AG04449 (cell line): ENCODE measurements at regions of chr7 and their contacts with region 1.

Region 1: GRCh38 chr7:25894902-25895791 is 256.9 kb upstream of the NFE2L3 start:
- DNase-seq: no peak
- H3K4me3 ChIP-seq: peak overlapping the region; percentile 13; the same call in 1 of the 2 replicates
- CTCF ChIP-seq: peak; percentile 74

Region 2: DNA sequence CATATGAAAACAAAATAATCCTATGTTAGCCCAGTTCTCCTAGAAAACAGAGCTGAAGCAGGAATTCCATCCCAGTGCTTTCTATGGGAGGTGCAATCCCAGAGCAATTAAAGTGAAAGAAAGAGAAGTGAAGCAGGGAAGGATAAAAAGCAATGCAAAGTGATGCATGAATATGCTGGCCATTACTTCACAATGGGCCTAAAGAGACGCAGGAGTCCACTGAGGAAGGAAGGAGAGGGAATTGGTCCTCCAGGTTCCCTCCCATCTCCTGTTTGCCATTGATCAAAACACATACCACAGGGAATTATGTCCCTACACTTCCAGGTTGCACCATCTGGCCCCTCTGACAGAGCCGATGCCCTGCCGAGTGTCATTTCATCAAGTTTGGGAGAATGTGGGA is 135.4 kb before region 1 on chr7:
- CTCF ChIA-PET with region 1: no interaction called
- POLR2A ChIA-PET with region 1: no interaction called
- DNase-seq: no peak
- H3K4me3 ChIP-seq: no peak overlapping the region
- CTCF ChIP-seq: no peak

Region 3: GRCh38 chr7:25877802-25878789 is 17.1 kb before region 1 on chr7:
- CTCF ChIA-PET with region 1: interaction called, 30 read pairs
- POLR2A ChIA-PET with region 1: no interaction called
- DNase-seq: no peak
- H3K4me3 ChIP-seq: no peak overlapping the region
- CTCF ChIP-seq: no peak

Region 4: GRCh38 chr7:26061688-26062150 is 166.6 kb after region 1 on chr7:
- CTCF ChIA-PET with region 1: interaction called, 21 read pairs
- POLR2A ChIA-PET with region 1: no interaction called
- DNase-seq: no peak
- H3K4me3 ChIP-seq: no peak overlapping the region
- CTCF ChIP-seq: peak; percentile 78

Region 5: GRCh38 chr7:26200444-26201246 is 305.5 kb after region 1 on chr7 and contains the start of gene HNRNPA2B1:
- CTCF ChIA-PET with region 1: interaction called, 19 read pairs
- POLR2A ChIA-PET with region 1: no interaction called
- DNase-seq: peak; percentile 93
- H3K4me3 ChIP-seq: peak within 1 kb of the TSS; percentile 98
- CTCF ChIP-seq: no peak

Region 6: GRCh38 chr7:26388256-26388655 is 493.1 kb after region 1 on chr7:
- CTCF ChIA-PET with region 1: interaction called, 10 read pairs
- POLR2A ChIA-PET with region 1: no interaction called
- DNase-seq: no peak
- H3K4me3 ChIP-seq: no peak overlapping the region
- CTCF ChIP-seq: no peak

Region 7: DNA sequence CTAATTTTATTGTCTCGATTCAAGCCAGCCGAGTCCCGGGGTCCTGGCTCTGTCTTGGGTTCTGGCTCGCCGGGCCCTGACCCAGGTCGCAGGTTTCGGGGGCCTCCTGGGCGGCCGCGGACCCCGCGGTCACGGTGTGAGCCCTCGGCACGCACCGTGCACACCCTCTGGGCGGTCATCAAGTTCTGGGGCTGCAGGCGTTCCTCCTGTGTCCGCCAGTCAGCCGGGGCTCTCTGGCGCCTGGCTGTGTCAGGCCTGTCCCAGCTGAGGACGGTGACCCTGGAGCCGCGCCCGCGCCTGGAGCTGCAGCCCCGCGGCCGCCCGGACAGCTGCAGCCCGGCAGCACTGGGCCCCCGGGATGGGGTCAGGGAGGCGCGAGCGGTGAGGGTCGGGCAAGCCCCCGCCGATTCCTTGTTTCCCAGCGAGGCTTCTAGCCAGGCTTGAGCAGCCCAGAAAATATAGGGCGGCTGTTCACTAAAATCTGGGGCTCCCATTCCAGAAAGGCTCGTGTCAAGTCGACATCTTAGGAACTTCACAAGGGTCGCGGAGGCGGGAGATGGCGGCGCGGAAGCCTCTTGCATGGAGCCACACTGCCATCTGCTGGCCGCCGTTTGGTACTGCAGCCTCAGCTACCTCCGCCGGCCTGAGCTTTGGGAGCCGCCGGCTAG is 1265.5 kb after region 1 on chr7:
- CTCF ChIA-PET with region 1: interaction called, 22 read pairs
- POLR2A ChIA-PET with region 1: no interaction called
- DNase-seq: no peak
- H3K4me3 ChIP-seq: peak overlapping the region; percentile 75
- CTCF ChIP-seq: peak; percentile 100